PC-3 (cell line): ENCODE measurements at regions of chr7 and their contacts with region 1.

Region 1: DNA sequence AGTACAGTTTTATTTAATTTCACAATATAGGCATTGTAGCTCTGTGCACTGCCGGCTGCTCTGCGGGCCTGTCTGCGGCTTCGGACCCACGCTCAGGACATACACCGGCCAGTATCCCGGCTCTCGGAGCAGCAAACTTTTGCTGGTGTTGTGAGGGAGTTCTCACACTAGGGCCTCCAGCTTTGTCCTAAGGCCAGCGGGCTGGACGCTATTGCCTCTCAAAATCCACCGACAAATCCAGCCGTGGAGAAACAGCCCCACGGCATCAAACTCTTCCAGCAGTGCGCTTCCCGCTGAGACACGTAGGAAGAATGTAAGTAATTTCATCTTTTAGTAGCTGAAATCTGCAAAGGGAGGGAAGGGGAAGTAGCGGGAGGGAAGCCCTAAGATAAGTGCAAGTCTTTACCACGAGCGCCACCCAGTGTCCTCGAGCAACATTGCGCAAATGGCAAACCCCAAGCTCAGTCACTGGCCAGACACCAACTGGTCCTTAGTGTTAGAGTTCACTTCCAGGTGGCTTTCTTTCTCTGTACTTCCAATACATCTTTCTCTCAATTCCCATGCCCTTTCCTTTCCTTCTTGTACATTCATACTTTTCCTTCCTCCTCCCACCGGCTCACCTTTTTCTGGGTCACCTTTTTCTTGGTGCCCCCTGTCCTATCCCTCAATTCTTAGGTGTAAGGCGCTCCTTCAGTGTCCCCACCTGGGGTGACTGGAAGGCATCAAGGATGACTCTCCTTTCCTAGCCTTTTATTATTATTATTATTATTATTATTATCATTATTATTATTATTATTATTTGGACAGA is 3.0 kb upstream of the DLX5 start:
- DNase-seq: peak; percentile 83
- ATAC-seq: peak; percentile 72
- H3K4me3 ChIP-seq: peak overlapping the region; percentile 66
- H3K27ac ChIP-seq: no peak overlapping the region
- H3K4me1 ChIP-seq: peaks cover 4% of the 10 kb centered on the region
- H3K27me3 ChIP-seq: no peaks in the 10 kb centered on the region
- CTCF ChIP-seq: peak; percentile 87

Region 2: DNA sequence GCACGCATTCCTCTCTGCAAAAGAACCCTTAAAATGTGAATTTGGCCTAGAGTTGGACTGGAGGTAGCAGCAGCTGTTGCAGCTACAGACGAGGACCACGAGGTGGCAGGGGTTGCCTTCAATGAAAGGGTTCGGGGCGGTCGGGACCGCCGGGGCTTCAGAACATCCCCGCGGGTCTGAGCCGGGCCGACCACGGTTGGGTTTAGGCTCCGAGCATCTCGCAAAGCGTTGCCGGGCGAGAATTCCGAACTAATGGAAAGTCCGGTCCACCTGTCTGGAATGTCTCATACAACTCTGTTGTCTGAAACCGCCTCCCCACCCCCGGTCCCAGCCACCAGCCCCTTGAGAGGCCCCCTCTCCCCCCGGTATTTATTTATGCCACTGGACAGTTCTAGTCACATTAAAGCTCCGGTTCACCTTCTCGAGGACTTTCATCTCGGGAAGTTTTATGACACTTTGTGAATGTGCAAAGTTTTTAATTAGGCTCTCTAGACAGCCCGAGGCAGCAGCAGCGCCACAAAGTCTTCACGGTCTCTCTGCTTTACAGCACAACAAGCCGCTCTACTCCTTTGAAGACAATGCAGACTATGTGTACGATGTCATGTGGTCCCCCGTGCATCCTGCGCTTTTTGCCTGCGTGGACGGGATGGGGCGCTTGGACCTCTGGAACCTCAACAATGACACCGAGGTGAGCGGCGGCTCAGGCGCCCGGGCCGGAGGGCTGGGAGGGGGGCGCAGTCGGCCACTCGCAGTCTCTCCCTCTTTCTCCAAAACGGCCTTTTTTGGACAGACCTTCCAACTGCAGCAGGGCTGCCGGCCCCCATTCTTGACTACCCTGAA is 951.9 kb before region 1 on chr7:
- CTCF ChIA-PET with region 1: interaction called, 3 read pairs
- POLR2A ChIA-PET with region 1: no interaction called
- intact Hi-C with region 1: loop called (anchors 1 kb)
- DNase-seq: peak; percentile 71
- ATAC-seq: peak; percentile 85
- H3K4me3 ChIP-seq: peak overlapping the region; percentile 73
- H3K27ac ChIP-seq: no peak overlapping the region
- H3K4me1 ChIP-seq: peaks cover 17% of the 10 kb centered on the region
- H3K27me3 ChIP-seq: no peaks in the 10 kb centered on the region
- CTCF ChIP-seq: peak; percentile 90

Region 3: DNA sequence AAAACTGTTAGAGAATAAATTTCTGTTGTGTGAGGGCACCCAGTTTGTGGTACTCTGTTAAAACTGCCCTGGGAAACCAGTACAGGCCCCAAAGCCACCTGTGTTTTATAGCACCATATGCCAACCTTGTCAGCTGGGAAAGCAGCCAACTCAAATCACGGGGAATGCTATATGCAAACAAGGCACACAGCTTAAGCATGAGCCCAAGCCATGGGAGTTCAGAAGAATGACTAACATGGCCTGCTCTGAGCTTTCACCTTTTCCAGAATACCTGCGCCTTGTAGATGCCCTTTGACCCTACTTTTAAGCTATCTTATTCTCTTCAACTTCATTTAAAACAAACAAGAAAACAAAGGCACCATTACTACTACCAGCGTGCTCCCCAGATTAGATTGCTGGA is 700.2 kb before region 1 on chr7:
- CTCF ChIA-PET with region 1: no interaction called
- POLR2A ChIA-PET with region 1: no interaction called
- intact Hi-C with region 1: loop called (anchors 5 kb)
- DNase-seq: peak; percentile 89
- ATAC-seq: peak; percentile 75
- H3K4me3 ChIP-seq: peak overlapping the region; percentile 24; the same call in 1 of the 2 replicates
- H3K27ac ChIP-seq: peak overlapping the region; percentile 98
- H3K4me1 ChIP-seq: peaks cover 36% of the 10 kb centered on the region
- H3K27me3 ChIP-seq: no peaks in the 10 kb centered on the region
- CTCF ChIP-seq: no peak

Region 4: GRCh38 chr7:96526492-96526891 is 501.1 kb before region 1 on chr7:
- CTCF ChIA-PET with region 1: no interaction called
- POLR2A ChIA-PET with region 1: no interaction called
- intact Hi-C with region 1: no loop called
- DNase-seq: no peak
- ATAC-seq: no peak
- H3K4me3 ChIP-seq: no peak overlapping the region
- H3K27ac ChIP-seq: no peak overlapping the region
- H3K4me1 ChIP-seq: no peaks in the 10 kb centered on the region
- H3K27me3 ChIP-seq: peaks cover 7% of the 10 kb centered on the region
- CTCF ChIP-seq: no peak

Region 5: GRCh38 chr7:96596120-96596826 is 431.4 kb before region 1 on chr7:
- CTCF ChIA-PET with region 1: interaction called, 8 read pairs
- POLR2A ChIA-PET with region 1: no interaction called
- intact Hi-C with region 1: loop called (anchors 1 kb)
- DNase-seq: peak; percentile 32
- ATAC-seq: peak; percentile 66
- H3K4me3 ChIP-seq: no peak overlapping the region
- H3K27ac ChIP-seq: no peak overlapping the region
- H3K4me1 ChIP-seq: no peaks in the 10 kb centered on the region
- H3K27me3 ChIP-seq: no peaks in the 10 kb centered on the region
- CTCF ChIP-seq: peak; percentile 47

Region 6: GRCh38 chr7:96800824-96801223 is 226.8 kb before region 1 on chr7:
- CTCF ChIA-PET with region 1: no interaction called
- POLR2A ChIA-PET with region 1: no interaction called
- intact Hi-C with region 1: loop called (anchors 10 kb)
- DNase-seq: peak; percentile 66
- ATAC-seq: peak; percentile 55
- H3K4me3 ChIP-seq: no peak overlapping the region
- H3K27ac ChIP-seq: no peak overlapping the region
- H3K4me1 ChIP-seq: no peaks in the 10 kb centered on the region
- H3K27me3 ChIP-seq: no peaks in the 10 kb centered on the region
- CTCF ChIP-seq: peak; percentile 44